ENCODE measurements at regions of chr16 and their contacts with region 1.

Region 1: DNA sequence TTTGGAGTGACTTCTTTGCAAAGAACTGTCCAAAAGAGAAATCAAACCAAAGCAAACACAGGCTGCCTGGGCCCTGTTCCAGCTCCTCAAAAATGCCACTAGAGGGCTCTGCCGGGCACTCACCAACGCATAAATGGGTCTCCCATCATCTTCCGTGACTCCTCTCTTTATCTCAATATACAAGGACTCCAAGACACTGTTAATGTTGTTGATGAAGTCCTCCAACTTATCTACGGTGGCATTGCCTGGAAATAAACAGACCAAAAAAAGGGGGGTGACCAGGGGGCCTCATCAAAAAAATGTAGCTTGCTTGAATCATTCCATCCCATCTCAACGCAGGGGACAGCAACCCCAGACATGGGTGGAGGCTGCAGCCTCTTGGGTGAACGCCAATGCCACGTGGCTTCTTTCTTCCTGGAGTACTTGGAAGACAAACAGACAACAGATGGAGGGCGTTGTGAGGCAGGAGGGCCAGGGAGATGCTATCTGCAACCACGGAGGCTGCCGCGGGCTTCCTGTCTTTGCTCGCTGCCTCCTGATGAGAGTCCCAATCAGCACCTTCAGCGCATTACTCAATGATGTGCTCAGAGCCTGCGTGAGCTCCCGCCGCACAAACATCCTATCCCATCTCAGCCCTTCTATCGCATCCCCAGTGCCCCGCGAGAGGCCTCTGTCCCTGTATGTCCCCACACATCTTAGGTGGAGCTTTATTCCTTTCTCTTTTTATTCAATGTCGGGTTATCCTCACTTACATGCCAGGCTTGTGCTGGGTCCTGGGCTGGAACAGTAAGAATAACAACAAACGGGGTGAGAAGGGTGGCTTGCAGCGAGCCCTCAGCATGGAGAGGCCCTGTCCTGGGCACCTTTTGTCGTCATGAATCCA is 32.0 kb downstream of the KDM8 start:
- DNase-seq: peak; percentile 92 to 99
- H3K4me3 ChIP-seq: no peak overlapping the region
- CTCF ChIP-seq: peak in 1 of 3 donors; percentile 63
- POLR2A ChIP-seq: no peak

Region 2: GRCh38 chr16:27080870-27081269 is 154.4 kb before region 1 on chr16:
- intact Hi-C with region 1: no loop called
- DNase-seq: no peak
- H3K4me3 ChIP-seq: no peak overlapping the region
- CTCF ChIP-seq: no peak
- POLR2A ChIP-seq: no peak

Region 3: DNA sequence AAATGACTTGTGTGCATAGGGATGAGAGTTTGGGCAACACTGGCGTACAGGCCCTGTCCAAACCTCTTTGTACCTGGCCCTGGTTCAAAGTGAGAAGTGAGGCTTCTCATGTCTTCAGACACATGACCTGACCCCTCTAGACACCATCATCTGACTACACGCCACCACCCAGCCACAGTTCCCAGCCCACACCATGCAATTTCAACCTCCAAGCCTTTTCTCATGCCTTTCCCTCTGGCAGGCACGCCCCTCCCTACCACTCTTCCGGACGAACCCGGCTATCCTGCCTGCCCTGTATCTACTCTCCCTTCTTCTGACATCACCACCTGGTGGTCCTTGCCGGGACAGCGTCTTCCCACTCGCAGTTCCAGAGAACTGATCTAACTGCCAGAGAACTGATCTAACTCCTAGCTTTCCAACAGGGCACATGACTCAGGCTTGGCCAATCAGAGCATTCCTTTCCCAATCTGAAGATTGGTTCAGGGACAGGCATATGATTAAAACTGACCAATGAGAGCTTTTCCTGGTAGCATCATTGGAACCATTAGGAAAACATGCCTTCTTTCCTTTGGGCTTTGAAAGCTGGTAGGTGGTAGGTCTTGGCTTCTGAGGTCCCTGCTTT is 139.6 kb after region 1 on chr16:
- intact Hi-C with region 1: loop called (anchors 5 kb)
- DNase-seq: peak; percentile 40 to 91
- H3K4me3 ChIP-seq: no peak overlapping the region
- CTCF ChIP-seq: no peak
- POLR2A ChIP-seq: no peak

Region 4: DNA sequence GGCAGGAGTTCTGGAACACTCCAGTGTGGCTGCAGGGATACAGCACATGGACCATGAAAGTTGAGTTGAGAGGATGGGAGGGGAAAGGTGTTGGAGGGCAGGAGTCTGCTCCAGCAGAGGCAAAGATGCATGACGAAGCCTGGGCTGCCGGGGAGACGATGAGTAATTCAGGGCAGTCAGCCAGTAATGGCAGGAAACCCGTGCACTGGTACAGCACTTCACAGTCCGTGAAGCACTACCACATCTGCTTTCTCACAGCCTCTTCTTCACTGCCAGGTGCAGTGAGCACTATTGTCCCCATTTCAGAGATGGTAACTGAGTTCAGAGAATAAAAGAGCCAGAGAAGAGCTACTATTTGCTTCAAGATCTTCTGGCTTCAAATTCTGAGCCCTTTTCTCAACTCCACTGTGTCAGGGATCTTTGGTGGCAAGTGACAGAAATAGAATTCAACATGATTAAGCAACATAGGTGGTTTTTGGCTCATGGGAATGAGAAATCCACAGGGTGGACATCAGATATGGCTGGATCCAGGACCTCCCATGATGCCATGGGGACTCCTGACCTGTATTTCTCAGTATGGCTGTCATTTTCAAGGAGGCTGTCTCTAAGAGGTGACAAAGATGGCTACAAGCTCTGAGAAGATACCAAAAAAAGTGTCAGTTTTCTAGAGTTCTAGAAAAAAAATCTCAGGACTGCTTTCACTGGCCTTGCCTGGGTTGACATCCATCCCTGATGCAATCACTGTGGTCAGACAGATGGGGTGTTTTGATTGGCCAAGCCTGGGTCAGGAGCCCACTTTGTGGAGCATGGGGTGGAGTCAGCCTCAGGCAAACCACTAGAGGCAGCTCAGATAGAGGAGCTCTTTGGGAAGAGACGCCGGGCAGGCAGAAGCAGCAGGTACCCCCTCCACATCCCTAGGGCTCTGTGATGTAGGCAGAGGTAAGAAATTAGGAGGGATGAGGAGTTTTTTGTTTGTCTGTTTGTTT is 191.4 kb after region 1 on chr16:
- intact Hi-C with region 1: no loop called
- DNase-seq: peak; percentile 33 to 84
- H3K4me3 ChIP-seq: no peak overlapping the region
- CTCF ChIP-seq: no peak
- POLR2A ChIP-seq: no peak

Region 5: DNA sequence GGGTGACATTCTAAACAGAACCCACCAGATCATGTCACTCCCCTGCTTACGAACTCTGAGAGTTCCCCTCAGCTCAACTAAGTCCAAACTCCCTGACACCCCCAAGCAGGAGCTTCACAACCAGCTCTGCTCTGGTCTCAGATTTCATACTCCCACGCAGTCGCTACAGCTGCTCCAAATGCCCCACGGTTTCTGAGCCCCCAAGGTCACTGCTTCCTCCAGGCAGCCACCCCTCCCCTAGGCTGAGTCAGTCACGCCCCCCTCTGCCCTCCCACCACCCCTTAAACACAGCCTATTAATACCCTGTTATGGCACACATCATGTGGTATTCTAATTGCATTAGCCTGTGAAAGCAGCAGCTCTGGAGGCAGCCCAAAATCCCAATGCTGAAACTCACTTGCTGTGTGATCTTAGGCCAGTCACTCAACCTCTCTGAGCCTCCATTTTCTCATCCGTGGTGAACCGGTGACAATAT is 776.7 kb after region 1 on chr16:
- intact Hi-C with region 1: no loop called
- DNase-seq: no peak
- H3K4me3 ChIP-seq: no peak overlapping the region
- CTCF ChIP-seq: no peak
- POLR2A ChIP-seq: no peak